ENCODE measurements at regions of chr1 and their contacts with region 1.

Region 1: DNA sequence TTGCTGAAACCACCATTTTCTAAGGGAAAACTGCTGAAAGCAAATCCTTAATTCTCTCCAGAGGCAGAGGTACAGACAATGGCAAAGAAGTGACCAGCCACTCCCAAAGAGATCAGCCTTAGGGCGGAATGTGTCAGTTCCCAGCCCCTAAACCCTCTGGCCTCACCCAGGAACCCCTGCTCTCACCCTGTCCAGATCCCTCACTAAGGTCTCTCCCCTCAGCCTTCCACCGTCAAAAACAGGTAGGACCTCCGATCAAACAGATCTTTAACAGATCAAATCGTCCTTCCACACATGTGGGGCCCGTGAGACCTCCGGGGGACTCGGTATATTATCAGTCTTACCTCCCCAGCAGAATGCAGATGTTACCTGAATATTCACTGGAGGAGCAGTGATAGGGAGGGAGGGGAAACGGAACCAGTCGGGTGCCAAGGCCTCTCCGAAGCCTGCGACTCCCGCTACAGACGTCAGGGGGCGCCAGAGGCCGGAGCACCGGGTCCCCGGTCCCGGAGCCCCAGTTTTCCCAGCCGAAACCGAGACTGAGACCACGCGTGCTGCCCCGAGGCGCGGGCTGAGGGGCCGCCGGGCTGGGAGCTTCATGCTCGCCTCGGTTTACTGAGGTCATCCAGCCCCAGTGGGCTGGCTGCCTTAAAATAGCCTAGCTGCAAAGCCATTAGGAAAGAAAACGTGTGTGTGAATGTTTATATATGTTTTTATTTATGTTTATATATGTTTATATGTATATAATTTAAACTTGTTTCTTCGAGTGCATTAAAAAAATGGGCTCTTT is 23.6 kb downstream of the GPA33 start:
- DNase-seq: peak; percentile 94
- H3K4me3 Mint-ChIP-seq: peak overlapping the region; percentile 51
- H3K27ac Mint-ChIP-seq: no peak overlapping the region
- H3K4me1 Mint-ChIP-seq: no peaks in the 10 kb centered on the region
- H3K27me3 Mint-ChIP-seq: peaks cover 1% of the 10 kb centered on the region

Region 2: DNA sequence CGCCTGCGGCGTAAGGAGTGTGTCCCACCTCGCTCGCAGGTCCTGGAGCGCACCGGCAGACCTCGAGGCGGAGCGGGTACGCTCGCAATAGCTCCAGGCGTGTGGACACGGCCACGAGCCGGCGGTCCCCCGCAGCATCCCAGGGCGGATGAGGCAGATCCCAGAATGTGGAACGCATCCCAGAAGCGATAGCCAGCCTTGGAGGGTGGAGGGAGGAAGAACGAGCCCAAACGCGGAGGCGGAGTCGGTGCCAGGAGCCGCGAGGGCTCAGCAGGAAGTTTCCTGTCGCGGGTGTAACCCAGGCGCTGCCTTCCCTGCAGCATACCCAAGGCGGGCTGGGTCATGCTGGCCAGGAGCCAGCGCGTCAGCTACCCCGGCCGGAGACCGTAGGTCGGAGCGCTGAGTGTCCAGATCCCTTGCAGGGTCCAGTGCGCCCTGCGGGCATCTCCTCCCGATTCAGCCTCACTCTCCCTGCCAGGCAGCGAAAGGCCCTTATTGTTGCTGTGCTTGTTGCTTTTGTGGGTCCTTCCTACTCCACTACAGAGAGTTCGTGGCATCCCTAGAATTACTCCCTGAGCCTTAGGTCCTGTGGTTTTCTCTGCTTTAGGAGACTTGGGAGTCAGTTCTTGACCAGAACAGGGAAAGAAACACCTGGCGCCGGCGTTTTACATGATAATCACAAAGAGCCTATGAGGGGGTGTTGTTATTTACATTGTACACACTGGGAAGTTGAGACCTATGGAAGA is 55.0 kb after region 1 on chr1:
- intact Hi-C with region 1: loop called (anchors 1 kb)
- DNase-seq: peak; percentile 78
- H3K4me3 Mint-ChIP-seq: peak overlapping the region; percentile 86
- H3K27ac Mint-ChIP-seq: no peak overlapping the region
- H3K4me1 Mint-ChIP-seq: peaks cover 6% of the 10 kb centered on the region
- H3K27me3 Mint-ChIP-seq: peaks cover 7% of the 10 kb centered on the region

Region 3: DNA sequence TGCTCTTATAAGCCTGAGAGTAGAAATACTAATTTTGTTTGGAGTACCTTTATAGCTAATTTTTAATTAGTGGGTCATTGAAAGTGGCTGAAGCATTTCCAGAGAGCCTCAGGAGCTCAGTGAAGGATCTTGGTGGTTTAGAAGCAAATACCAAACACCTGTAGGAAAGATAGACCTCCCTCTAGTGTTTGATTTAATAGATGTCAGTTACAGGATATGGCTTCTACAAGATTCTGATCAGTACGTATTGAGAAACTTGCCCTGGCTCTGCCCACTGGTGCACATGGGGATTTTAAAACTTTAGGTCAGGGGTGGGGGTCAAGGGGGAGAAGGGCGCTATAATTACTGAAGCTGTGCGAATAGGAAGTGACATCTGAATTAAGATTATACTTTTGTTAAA is 276.3 kb after region 1 on chr1:
- intact Hi-C with region 1: loop called (anchors 5 kb)
- DNase-seq: no peak
- H3K4me3 Mint-ChIP-seq: no peak overlapping the region
- H3K27ac Mint-ChIP-seq: no peak overlapping the region
- H3K4me1 Mint-ChIP-seq: peaks cover 9% of the 10 kb centered on the region
- H3K27me3 Mint-ChIP-seq: no peaks in the 10 kb centered on the region

Region 4: GRCh38 chr1:167401260-167401873 is 334.8 kb after region 1 on chr1:
- intact Hi-C with region 1: loop called (anchors 10 kb)
- DNase-seq: peak; percentile 83
- H3K4me3 Mint-ChIP-seq: no peak overlapping the region
- H3K27ac Mint-ChIP-seq: no peak overlapping the region
- H3K4me1 Mint-ChIP-seq: no peaks in the 10 kb centered on the region
- H3K27me3 Mint-ChIP-seq: no peaks in the 10 kb centered on the region

Region 5: GRCh38 chr1:167442124-167442848 is 375.8 kb after region 1 on chr1:
- intact Hi-C with region 1: loop called (anchors 1 kb)
- DNase-seq: peak; percentile 95
- H3K4me3 Mint-ChIP-seq: peak overlapping the region; percentile 21
- H3K27ac Mint-ChIP-seq: peak overlapping the region; percentile 50
- H3K4me1 Mint-ChIP-seq: peaks cover 73% of the 10 kb centered on the region
- H3K27me3 Mint-ChIP-seq: no peaks in the 10 kb centered on the region

Region 6: DNA sequence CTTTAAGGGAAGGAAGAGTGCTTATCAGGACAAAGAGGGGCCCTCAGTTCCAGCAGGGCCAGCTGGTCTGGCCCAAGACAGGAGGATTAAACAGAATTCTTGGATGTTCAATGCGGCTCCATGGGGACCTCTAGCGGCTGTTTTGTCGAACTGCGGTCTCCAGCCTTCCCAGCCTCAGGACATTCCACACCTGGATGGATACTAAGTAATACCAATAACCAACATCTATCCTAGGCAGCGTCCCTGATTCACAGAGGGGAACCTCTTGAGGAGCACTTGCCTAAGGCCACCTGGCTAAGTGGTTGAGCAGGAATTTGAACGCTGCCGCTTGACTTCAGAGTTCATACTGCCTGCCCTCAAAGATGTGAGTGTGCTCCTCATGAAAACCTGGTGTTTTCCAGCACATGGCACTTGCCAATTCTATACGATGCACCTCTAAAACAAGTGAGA is 467.3 kb after region 1 on chr1:
- intact Hi-C with region 1: loop called (anchors 5 kb)
- DNase-seq: peak; percentile 89
- H3K4me3 Mint-ChIP-seq: no peak overlapping the region
- H3K27ac Mint-ChIP-seq: no peak overlapping the region
- H3K4me1 Mint-ChIP-seq: peaks cover 7% of the 10 kb centered on the region
- H3K27me3 Mint-ChIP-seq: peaks cover 1% of the 10 kb centered on the region

Region 7: DNA sequence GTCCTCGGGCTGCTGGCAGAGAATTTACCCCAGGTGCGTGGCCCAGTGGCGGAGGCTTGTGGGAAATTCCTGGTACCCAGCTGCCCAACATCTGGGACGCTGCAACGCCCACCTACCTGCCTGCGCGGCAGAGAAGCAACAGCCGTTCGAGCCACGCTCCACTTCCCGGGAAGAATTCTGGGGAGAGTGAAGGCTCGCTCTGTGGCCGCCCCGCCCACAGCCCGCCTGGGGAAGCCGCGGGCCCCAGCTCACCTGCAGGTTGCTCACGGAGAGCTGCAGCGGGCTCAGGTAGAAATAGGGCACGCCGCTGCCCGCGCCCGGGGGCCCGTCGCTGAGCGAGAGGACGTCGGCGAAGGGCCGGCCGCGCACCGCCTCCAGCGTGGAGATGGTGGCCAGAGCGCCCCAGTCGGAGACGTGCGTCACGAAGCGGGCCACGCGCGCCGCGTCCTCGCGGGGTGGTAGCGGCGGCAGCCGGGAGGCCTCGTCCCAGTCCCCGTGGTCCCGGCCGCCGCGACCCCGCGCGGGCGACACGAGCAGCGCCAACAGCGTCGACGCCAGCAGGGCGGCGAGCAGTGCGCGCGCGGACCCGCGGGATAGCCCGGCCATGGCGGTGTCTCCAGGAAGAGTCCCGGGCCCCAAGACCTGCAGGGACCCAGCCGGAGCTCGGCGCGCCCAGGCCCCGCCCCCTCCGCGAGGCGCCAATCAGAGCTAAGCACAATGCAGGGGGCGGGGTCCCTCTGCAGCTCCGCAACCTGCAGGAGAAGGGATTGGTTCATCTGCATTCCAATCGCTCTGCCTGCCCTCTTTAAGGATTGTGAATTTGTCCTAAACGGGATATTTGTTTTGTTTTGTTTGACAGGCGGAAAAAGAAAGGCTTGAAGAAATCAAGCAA is 486.9 kb after region 1 on chr1 and contains the start of gene CREG1:
- intact Hi-C with region 1: loop called (anchors 1 kb)
- DNase-seq: peak; percentile 98
- H3K4me3 Mint-ChIP-seq: peak within 1 kb of the TSS; percentile 88
- H3K27ac Mint-ChIP-seq: no peak within 1 kb of the TSS
- H3K4me1 Mint-ChIP-seq: peaks cover 26% of the 10 kb centered on the region
- H3K27me3 Mint-ChIP-seq: peaks cover 6% of the 10 kb centered on the region
- total RNA-seq, gene CREG1: 12.3 and 13.6 TPM in 2 replicates

Measured in activated CD4-positive, alpha-beta T cell treated with anti-CD3 and anti-CD28 coated beads, Interleukin-2, amount 10 ng/mL, durations not matched to agents 24 days and 14 days (primary cell).